ENCODE measurements at regions of chr2 and their contacts with region 1.

Region 1: DNA sequence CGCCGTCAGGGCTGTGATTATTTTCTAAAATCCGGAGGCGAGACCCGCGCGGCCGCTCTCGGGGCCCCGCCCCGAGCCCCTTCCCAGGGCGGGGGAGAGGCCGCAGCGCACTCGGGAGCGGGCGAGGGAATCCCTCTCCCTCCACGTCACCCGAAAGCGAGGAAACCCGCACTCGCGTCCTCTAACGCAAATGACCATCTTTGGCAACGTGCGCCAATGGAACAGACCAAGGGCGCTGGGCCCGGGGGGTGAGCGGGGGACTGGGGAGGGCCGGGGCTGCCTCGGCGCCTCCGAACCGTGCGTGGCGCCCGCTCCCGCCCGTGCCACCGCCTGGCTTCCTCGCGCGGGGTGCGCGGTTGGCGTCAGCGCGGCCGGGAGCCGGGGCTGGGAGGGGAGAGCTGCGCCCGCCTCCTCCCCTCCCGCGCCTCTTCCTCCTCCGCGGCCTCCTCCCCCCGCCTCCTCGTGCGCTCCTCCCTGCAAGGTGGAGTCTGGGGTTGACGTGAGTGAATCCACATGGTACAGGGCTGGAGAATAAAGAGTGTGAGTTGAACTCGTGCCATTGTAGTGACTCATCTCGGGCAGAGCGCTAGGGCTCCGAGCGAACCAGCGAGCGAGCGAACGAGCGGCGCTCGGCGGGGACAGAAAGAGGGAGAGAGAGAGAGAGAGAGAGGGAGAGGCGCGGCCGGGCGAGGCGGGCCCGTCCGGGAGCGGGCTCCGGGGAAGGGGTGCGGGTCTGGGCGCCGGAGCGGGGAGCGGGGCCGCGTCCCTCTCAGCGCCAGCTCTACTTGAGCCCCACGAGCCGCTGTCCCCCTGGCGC is at the start of gene FOSL2:
- DNase-seq: peak; percentile 100
- H3K4me3 ChIP-seq: peak within 1 kb of the TSS; percentile 80 to 93 (median 83)
- H3K27ac ChIP-seq: peak within 1 kb of the TSS; percentile 95
- H3K4me1 ChIP-seq: peaks cover 36% of the 10 kb centered on the region
- H3K27me3 ChIP-seq: no peaks in the 10 kb centered on the region
- CTCF ChIP-seq: peak in 1 of 2 donors; percentile 6
- total RNA-seq, gene FOSL2: 89.9 to 92.9 TPM

Region 2: DNA sequence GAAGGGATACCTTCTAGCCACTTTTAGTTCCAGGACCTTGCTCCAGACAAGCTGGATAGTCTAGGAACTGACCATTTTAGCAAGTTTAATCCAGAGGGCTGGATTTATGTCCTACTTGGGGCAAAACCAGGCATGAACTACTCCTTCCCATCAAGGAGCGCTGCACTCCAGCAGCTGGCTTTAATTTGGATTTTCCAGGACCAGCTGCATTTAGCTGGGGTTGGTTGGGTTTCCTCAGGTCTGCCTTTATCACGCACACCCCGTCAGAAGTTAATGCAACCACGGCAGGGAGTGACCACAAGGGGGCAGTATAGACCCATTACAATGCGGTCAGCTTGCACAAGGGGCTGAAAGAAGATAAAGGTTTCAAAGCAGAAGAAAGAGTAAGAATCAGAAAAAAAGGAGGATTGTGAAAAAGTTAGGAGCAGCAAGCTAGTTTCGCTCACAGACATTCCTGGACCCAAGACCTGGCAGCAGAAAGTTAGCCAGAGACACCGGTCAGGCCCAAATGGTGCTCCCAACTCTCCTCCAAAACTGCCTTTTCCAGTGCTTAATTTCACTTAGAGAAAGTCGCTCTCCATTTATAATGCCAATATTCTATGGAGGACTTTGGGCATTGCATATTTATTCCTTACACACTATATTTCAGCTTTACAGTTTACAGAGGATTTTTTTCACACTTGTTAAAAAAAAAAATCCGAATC is 688.7 kb before region 1 on chr2:
- CTCF ChIA-PET with region 1: interaction called, 3 read pairs
- dilution Hi-C with region 1: no loop called
- in situ Hi-C with region 1: no loop called
- intact Hi-C with region 1: loop called (anchors 1 kb)
- DNase-seq: peak; percentile 80
- H3K4me3 ChIP-seq: no peak overlapping the region
- H3K27ac ChIP-seq: no peak overlapping the region
- H3K4me1 ChIP-seq: peaks cover 40% of the 10 kb centered on the region
- H3K27me3 ChIP-seq: no peaks in the 10 kb centered on the region
- CTCF ChIP-seq: peak; percentile 91 to 93

Region 3: GRCh38 chr2:27798948-27799645 is 593.4 kb before region 1 on chr2:
- CTCF ChIA-PET with region 1: no interaction called
- dilution Hi-C with region 1: no loop called
- in situ Hi-C with region 1: no loop called
- intact Hi-C with region 1: loop called (anchors 2 kb)
- DNase-seq: peak; percentile 100
- H3K4me3 ChIP-seq: no peak overlapping the region
- H3K27ac ChIP-seq: peak overlapping the region; percentile 94
- H3K4me1 ChIP-seq: peaks cover 30% of the 10 kb centered on the region
- H3K27me3 ChIP-seq: no peaks in the 10 kb centered on the region
- CTCF ChIP-seq: no peak

Region 4: DNA sequence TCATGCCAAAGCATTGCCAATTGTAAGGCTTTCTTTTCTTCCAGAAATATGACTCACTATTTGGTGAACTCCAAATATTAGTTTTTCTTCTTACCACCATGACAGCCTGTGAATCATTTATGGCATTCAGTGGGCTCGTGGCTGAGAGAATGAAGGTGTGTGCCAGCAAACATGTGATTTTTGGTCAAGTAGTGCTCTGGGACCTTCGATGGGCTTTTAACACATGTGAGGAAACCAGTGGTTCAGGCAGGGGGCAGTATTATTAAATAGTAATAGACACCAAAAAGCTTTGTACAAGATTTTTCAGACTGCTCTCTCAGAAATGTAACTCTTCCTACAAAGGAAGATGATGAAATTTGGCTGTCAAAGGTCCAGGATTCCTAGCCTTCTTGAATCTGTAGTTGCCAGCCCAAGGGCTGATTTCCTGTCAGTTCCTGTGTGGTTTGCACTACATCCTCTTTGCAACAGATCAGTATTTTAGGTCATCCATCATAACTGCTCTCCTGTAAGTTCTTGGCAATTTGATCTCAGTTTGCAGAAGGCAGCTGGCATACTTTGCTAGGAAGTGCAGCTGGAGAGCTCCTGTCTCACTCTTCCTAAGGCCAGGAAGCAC is 437.6 kb before region 1 on chr2:
- CTCF ChIA-PET with region 1: no interaction called
- dilution Hi-C with region 1: no loop called
- in situ Hi-C with region 1: loop called in 1 of 2 experiments (anchors 10 kb)
- intact Hi-C with region 1: loop called (anchors 1 kb)
- DNase-seq: peak; percentile 92
- H3K4me3 ChIP-seq: peak overlapping the region in 1 of 3 experiments; percentile 4
- H3K27ac ChIP-seq: peak overlapping the region; percentile 84
- H3K4me1 ChIP-seq: peaks cover 66% of the 10 kb centered on the region
- H3K27me3 ChIP-seq: no peaks in the 10 kb centered on the region
- CTCF ChIP-seq: peak; percentile 3 to 33

Region 5: GRCh38 chr2:28155627-28156026 is 236.9 kb before region 1 on chr2:
- CTCF ChIA-PET with region 1: no interaction called
- dilution Hi-C with region 1: no loop called
- in situ Hi-C with region 1: no loop called
- intact Hi-C with region 1: loop called (anchors 1 kb)
- DNase-seq: no peak
- H3K4me3 ChIP-seq: no peak overlapping the region
- H3K27ac ChIP-seq: no peak overlapping the region
- H3K4me1 ChIP-seq: peaks cover 16% of the 10 kb centered on the region
- H3K27me3 ChIP-seq: no peaks in the 10 kb centered on the region
- CTCF ChIP-seq: peak; percentile 68 to 88

Region 6: GRCh38 chr2:28224648-28225472 is 167.6 kb before region 1 on chr2:
- CTCF ChIA-PET with region 1: interaction called, 5 read pairs
- dilution Hi-C with region 1: no loop called
- in situ Hi-C with region 1: no loop called
- intact Hi-C with region 1: loop called (anchors 2 kb)
- DNase-seq: peak; percentile 67
- H3K4me3 ChIP-seq: no peak overlapping the region
- H3K27ac ChIP-seq: no peak overlapping the region
- H3K4me1 ChIP-seq: peaks cover 19% of the 10 kb centered on the region
- H3K27me3 ChIP-seq: no peaks in the 10 kb centered on the region
- CTCF ChIP-seq: no peak

Region 7: DNA sequence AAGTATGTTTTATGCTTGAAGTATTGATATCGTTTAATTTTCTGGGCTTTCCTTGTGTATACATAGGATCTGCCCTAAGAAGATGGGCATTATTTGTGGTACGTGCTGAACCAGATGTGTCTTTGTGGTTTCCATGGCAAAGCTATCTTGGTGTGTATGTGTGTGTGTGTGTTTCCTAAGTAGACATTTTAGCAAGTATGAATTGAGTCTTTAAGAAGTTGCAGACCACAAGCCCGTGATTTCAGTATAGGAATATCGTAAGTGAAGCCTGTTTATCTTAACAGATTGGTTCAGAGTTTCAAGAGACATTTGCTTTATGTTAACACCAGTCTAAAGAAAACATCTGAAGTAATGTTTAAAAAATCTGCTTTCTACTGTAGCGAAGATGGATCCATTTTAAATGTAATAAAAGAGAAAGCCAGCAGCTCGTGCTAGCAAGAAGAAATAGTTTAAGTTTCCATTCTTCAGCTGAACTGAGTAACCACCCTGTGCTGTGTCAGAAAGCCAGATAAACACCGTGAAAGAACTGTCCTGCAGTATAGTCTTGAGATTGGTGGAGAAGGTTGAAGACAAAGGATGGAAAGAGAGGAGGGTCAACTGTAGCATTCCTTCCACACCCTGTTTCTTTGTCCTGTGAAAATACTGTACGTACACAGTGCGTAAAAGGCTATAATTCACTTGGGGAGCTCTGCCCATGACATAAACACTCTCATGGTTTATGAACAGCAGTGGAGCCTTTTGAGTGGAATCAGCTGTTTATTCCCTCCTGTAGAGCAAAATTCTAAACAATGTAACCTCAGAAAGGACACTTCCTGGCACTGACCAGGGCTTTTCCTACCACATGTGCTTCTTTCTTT is 91.8 kb before region 1 on chr2:
- CTCF ChIA-PET with region 1: interaction called, 10 read pairs
- dilution Hi-C with region 1: no loop called
- in situ Hi-C with region 1: no loop called
- intact Hi-C with region 1: no loop called
- DNase-seq: no peak
- H3K4me3 ChIP-seq: no peak overlapping the region
- H3K27ac ChIP-seq: no peak overlapping the region
- H3K4me1 ChIP-seq: peaks cover 12% of the 10 kb centered on the region
- H3K27me3 ChIP-seq: no peaks in the 10 kb centered on the region
- CTCF ChIP-seq: no peak

Region 8: DNA sequence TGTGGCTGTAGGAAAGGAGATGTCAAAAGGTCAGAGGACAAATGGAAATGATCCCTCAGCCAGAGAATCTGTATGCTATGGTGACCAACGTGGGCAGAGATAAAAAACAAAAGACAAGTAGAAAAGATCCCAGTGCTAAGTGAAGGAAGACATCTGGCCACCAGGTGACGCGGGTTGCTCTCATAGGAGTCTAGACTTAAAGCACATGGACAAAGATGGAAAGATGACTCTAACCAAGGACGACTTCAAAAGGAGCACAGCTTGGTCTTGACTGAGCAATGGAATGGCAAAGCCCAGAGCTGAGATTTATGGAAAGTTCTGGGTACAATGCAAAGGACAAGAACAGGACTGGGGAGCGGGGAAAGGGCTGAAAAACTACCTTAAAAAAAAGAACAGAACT is 819.5 kb after region 1 on chr2:
- CTCF ChIA-PET with region 1: no interaction called
- dilution Hi-C with region 1: no loop called
- in situ Hi-C with region 1: no loop called
- intact Hi-C with region 1: no loop called
- DNase-seq: no peak
- H3K4me3 ChIP-seq: no peak overlapping the region
- H3K27ac ChIP-seq: no peak overlapping the region
- H3K4me1 ChIP-seq: peaks cover 5% of the 10 kb centered on the region
- H3K27me3 ChIP-seq: no peaks in the 10 kb centered on the region
- CTCF ChIP-seq: no peak

Measured in mammary epithelial cell (primary cell).